A673 (cell line): ENCODE measurements at regions of chr7 and their contacts with region 1.

Region 1: GRCh38 chr7:20598459-20599309 is 16.8 kb upstream of the ABCB5 start:
- DNase-seq: peak; percentile 74
- H3K4me3 ChIP-seq: peak overlapping the region; percentile 36
- H3K27ac ChIP-seq: no peak overlapping the region
- H3K4me1 ChIP-seq: no peaks in the 10 kb centered on the region
- H3K27me3 ChIP-seq: no peaks in the 10 kb centered on the region
- CTCF ChIP-seq: peak; percentile 82

Region 2: GRCh38 chr7:19713676-19714075 is 885.0 kb before region 1 on chr7:
- CTCF ChIA-PET with region 1: interaction called, 28 read pairs
- POLR2A ChIA-PET with region 1: no interaction called
- intact Hi-C with region 1: loop called (anchors 1 kb)
- DNase-seq: peak; percentile 64
- H3K4me3 ChIP-seq: no peak overlapping the region
- H3K27ac ChIP-seq: no peak overlapping the region
- H3K4me1 ChIP-seq: no peaks in the 10 kb centered on the region
- H3K27me3 ChIP-seq: peaks cover 4% of the 10 kb centered on the region
- CTCF ChIP-seq: peak; percentile 64

Region 3: DNA sequence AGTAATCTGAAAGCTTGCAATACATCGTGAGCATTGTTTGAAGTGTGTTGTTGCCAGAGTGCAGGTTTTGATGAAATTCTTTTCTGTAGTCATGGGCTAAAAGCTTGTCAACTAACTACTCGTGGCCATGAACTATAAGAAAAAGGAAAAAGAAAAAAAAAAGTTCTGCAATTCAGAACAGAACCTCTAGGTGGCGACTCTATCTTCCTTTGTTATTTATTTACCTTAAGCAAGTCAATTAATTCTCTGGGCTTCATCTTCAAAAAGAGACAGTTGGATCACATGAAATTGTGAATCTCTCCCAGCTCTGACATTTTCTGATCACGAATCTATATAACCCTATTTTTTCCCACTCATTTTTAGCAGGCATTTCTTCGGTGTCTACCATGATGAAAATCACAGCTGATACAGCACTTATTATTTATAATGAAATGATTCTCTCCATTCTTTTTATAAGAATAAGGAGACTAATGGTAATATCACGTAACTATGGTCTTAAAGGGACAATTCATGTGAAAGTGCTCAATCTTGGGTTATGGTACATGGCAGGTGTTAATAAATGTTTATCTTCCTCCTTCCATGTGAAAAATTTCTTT is 844.1 kb before region 1 on chr7:
- CTCF ChIA-PET with region 1: interaction called, 5 read pairs
- POLR2A ChIA-PET with region 1: no interaction called
- intact Hi-C with region 1: loop called (anchors 2 kb)
- DNase-seq: peak; percentile 60
- H3K4me3 ChIP-seq: no peak overlapping the region
- H3K27ac ChIP-seq: no peak overlapping the region
- H3K4me1 ChIP-seq: no peaks in the 10 kb centered on the region
- H3K27me3 ChIP-seq: peaks cover 42% of the 10 kb centered on the region
- CTCF ChIP-seq: peak; percentile 84

Region 4: GRCh38 chr7:20310963-20311742 is 287.5 kb before region 1 on chr7:
- CTCF ChIA-PET with region 1: no interaction called
- POLR2A ChIA-PET with region 1: no interaction called
- intact Hi-C with region 1: loop called (anchors 5 kb)
- DNase-seq: peak; percentile 57
- H3K4me3 ChIP-seq: no peak overlapping the region
- H3K27ac ChIP-seq: no peak overlapping the region
- H3K4me1 ChIP-seq: no peaks in the 10 kb centered on the region
- H3K27me3 ChIP-seq: no peaks in the 10 kb centered on the region
- CTCF ChIP-seq: peak; percentile 65

Region 5: DNA sequence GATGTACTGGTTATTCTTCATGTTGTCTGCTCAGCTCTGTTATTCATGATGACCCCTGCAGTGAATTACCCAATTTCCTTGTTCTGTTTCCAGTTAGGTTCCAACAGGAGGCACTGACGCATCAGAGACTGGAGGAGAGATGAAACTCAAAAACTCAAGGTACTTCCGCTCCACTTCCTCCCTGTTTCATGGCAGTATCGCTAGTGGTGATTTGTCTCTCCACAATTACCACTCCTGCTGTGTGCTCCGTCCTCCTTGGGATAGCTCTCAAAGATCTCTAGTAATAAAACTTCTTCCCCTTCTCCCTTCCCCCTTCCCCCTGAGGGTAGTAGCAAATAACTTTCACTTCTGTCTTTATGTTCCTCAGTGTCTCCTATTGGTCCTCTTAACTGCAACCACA is 90.6 kb before region 1 on chr7:
- CTCF ChIA-PET with region 1: interaction called, 8 read pairs
- POLR2A ChIA-PET with region 1: no interaction called
- intact Hi-C with region 1: loop called (anchors 2 kb)
- DNase-seq: peak; percentile 78
- H3K4me3 ChIP-seq: no peak overlapping the region
- H3K27ac ChIP-seq: no peak overlapping the region
- H3K4me1 ChIP-seq: no peaks in the 10 kb centered on the region
- H3K27me3 ChIP-seq: peaks cover 2% of the 10 kb centered on the region
- CTCF ChIP-seq: peak; percentile 43

Region 6: GRCh38 chr7:20906801-20907453 is 308.2 kb after region 1 on chr7:
- CTCF ChIA-PET with region 1: no interaction called
- POLR2A ChIA-PET with region 1: no interaction called
- intact Hi-C with region 1: no loop called
- DNase-seq: no peak
- H3K4me3 ChIP-seq: no peak overlapping the region
- H3K27ac ChIP-seq: no peak overlapping the region
- H3K4me1 ChIP-seq: no peaks in the 10 kb centered on the region
- H3K27me3 ChIP-seq: peaks cover 4% of the 10 kb centered on the region
- CTCF ChIP-seq: no peak